ENCODE measurements at regions of chr2 and their contacts with region 1.

Region 1: DNA sequence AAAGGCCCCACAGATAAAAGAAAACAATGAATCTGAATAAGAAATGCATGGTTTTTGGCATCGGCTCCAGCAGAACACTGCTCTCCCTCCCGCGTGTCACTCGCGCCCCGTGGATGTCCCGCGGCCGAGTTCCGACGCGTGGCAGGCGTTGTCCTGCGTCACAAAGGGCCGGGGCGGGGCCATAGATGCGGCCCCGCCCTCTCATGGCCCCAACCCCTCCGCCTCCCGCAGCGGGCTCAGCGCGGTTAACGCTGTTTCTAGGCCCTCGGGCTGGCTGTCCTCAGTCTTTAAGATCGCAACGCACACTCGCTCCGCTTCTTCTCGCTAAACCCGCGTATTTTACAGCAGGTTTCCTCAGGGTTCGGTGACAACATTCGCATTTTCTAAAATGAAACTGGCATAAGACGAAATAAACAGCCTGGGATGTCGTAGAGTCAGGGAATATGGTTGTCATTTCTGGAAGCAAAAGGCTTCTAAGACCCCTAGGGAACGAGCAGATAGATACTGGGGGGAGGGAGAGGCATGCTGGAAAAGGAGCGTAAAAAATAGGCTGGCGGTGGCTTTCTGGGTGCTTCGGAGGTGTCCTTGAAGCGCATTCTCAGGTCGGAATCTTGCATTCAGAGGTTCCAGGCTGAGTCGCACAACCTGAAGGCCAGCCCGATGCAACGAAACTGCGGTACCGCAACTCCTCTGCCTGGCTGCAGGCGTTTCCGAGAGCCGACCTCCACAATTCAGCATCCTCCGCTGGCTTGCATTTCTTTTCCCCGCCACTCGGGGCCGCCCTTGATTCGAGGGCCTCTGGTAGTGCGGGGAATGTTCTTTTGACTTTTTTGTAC is at the start of gene FKBP7:
- DNase-seq: peak; percentile 96
- total RNA-seq, gene FKBP7: 6.5 TPM

Region 2: DNA sequence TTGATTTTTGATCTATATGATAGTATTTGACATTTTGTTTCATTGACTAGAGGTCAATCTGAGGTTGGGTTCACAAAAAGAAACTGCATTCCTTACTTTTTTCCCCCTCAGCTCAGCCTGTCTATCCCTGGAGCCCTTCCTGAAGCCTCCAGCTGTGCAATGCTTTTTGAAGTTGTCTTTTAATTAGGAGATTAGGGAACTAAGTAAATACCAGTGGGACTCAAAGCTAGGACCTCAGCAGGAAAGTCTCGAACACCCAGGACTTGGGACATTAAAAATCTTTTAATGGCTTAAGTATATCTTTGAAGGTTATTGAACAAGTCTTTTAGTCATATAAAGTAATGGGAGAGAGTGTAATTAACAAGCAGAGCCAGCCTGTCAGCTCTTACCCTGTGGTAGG is 626.3 kb before region 1 on chr2:
- intact Hi-C with region 1: no loop called
- DNase-seq: no peak

Region 3: DNA sequence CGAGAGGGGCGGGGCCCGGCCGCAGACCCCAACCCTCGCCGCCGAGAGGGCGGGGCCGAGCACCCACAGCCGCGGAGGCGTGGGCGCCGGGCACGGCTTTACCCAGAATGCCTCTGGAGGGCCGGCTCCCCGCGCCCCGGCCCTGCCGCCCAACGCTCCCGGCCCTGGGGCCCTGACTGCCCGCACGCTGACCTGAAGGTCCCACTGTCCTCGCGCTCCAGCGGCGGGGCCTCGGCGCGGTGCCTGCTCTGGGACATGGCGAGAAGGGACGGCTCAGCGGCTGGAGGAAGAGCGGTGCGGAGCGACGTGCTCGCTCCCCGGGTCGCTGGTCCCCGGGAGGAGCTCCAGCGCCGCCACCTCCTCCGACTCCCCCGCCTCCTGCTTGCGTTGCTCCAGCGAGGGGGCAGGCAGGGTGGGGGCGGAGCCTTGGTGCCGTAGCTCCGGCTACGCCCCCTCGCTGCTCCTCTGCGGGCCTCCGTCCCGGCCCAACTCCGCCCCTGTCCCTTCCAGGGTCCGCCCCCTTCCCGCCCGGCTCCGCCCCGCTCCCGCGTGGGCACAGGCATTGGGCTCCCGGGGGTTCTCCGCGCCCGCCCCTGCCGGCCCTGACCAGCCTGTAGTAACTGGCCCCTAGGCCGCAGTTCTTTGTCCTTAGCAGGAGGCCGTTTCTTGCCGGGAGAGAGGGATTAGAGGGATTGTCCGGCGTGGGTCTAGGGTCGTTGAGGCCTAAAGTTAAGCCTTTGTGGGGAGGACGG is 27.7 kb before region 1 on chr2 and contains the starts of genes PJVK and PRKRA:
- intact Hi-C with region 1: loop called (anchors 1 kb)
- DNase-seq: peak; percentile 99
- total RNA-seq, gene PJVK: 1.6 TPM
- total RNA-seq, gene PRKRA: 46.7 TPM